Activated CD4-positive, alpha-beta memory T cell treated with anti-CD3 and anti-CD28 coated beads, Interleukin-2, amount 10 ng/mL, durations not matched to agents 7 days and 5 days (primary cell): ENCODE measurements at regions of chr19 and their contacts with region 1.

Region 1: DNA sequence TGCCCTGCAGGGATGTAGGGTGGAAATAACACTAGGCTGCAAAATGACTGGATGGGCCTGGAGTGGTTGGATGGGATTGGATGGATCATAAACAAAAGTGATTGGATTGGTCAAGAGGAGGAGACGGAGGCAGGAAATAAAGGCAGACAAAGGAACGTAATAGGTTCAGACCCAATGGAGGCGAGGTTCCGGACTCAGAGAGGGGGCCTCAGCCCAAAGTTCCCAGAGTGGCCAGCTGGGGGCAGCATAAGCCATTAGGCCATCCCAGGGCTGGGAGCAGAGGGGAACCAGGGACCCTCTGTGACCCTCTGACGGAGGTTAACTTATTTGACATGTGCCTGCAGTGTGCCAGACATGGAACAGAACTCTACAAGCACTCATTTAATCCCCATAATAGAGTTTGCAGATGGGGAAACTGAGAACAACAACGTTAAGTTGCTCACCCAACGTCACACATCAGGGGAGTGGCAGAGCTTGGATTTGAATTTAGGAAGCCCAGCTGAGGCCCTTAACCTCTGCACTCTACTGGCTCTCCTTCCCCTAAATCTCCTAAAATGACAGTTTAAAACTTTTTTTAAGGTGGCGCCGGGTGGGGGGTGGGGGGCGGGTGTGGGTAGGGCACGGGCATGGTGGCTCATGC is 15.3 kb upstream of the MAP1S start:
- DNase-seq: peak; percentile 74
- H3K4me3 Mint-ChIP-seq: no peak overlapping the region
- H3K27ac Mint-ChIP-seq: no peak overlapping the region
- H3K4me1 Mint-ChIP-seq: no peaks in the 10 kb centered on the region
- H3K27me3 Mint-ChIP-seq: peaks cover 7% of the 10 kb centered on the region

Region 2: GRCh38 chr19:17654993-17655392 is 49.0 kb before region 1 on chr19:
- CTCF ChIA-PET with region 1: no interaction called
- POLR2A ChIA-PET with region 1: no interaction called
- DNase-seq: no peak
- H3K4me3 Mint-ChIP-seq: no peak overlapping the region
- H3K27ac Mint-ChIP-seq: no peak overlapping the region
- H3K4me1 Mint-ChIP-seq: no peaks in the 10 kb centered on the region
- H3K27me3 Mint-ChIP-seq: peaks cover 7% of the 10 kb centered on the region

Region 3: GRCh38 chr19:17725422-17726078 is 21.6 kb after region 1 on chr19:
- CTCF ChIA-PET with region 1: no interaction called
- POLR2A ChIA-PET with region 1: no interaction called
- DNase-seq: no peak
- H3K4me3 Mint-ChIP-seq: no peak overlapping the region
- H3K27ac Mint-ChIP-seq: no peak overlapping the region
- H3K4me1 Mint-ChIP-seq: peaks cover 25% of the 10 kb centered on the region
- H3K27me3 Mint-ChIP-seq: no peaks in the 10 kb centered on the region

Region 4: DNA sequence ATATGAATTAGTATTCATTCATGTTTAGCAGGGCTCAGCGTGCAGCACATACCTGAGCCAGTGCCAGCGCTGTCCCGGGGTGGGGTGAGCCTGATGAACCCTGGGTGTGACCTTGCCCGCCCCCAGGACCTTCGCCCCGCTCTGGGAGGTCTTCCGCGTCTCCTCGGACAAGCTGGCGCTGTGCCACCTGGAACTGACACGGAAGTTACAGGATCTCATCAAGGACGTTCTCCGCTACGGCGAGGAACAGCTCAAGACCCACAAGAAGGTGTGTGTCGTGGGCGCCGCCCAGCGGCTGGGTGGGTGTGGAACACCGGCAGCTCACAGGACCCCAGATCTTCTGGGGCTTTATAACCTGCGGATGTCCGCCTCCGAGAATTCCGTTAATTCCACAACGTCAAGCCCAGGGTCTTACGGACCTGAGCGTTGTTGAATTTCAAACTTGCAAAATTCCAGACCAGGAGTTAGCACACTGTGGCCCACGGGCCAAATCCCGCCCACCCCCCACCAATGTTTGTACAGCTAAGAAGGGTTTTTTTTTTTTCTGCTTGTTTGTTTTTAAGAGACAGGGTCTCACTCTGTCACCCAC is 62.7 kb after region 1 on chr19:
- CTCF ChIA-PET with region 1: interaction called, 11 read pairs
- POLR2A ChIA-PET with region 1: no interaction called
- DNase-seq: no peak
- H3K4me3 Mint-ChIP-seq: no peak overlapping the region
- H3K27ac Mint-ChIP-seq: no peak overlapping the region
- H3K4me1 Mint-ChIP-seq: peaks cover 8% of the 10 kb centered on the region
- H3K27me3 Mint-ChIP-seq: no peaks in the 10 kb centered on the region

Region 5: DNA sequence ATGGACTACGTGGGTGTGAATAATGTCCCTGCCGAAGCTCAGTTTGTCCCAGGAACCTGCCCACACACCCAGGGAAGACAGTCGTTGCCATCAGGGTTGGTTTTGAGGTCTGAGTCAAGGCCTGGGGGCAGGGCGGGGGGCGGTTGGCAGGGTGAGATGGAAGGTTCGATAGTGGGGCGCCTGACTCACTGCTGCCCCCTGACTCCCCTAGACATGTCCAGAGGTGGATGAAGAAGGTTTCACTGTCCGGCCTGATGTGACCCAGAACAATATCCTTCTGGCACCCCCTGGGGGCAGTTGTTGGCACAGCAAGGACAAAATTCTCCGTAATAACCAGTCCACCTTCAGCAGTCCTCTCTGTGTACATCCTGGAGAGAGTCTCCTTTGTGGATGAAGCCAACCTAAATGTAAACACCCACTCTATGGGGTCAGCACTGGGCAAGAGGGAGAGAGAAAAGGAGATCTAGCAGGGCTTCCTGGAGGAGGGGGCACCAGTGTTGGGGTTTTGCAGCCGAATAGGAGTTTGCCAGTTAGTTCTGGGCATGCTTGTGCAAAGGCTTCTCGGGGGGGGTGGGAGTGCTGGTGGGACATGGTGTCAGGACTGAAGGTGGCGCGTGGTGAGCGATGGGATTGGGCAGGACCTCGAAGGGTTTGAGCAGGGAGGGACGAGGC is 71.4 kb after region 1 on chr19:
- CTCF ChIA-PET with region 1: interaction called, 14 read pairs
- POLR2A ChIA-PET with region 1: no interaction called
- DNase-seq: peak; percentile 42
- H3K4me3 Mint-ChIP-seq: no peak overlapping the region
- H3K27ac Mint-ChIP-seq: peak overlapping the region; percentile 66
- H3K4me1 Mint-ChIP-seq: peaks cover 18% of the 10 kb centered on the region
- H3K27me3 Mint-ChIP-seq: no peaks in the 10 kb centered on the region